B cell (primary cell): ENCODE measurements at regions of chr4 and their contacts with region 1.

Region 1: GRCh38 chr4:164956766-164957643 is 20.5 kb downstream of the TRIM61 start:
- DNase-seq: peak; percentile 82
- ATAC-seq: peak; percentile 100
- H3K4me3 ChIP-seq: peak overlapping the region; percentile 38 to 81 (median 68)
- H3K4me3 Mint-ChIP-seq: peak overlapping the region; percentile 97
- H3K27ac ChIP-seq: peak overlapping the region in 1 of 2 donors; percentile 56
- H3K27ac Mint-ChIP-seq: peak overlapping the region; percentile 88
- H3K4me1 ChIP-seq: peaks cover 8 to 14% of the 10 kb centered on the region in 2 donors
- H3K4me1 Mint-ChIP-seq: peaks cover 18% of the 10 kb centered on the region
- H3K27me3 ChIP-seq: peaks cover 0 to 5% (median 2%) of the 10 kb centered on the region in 4 experiments
- H3K27me3 Mint-ChIP-seq: peaks cover 8% of the 10 kb centered on the region
- CTCF ChIP-seq: no peak

Region 2: DNA sequence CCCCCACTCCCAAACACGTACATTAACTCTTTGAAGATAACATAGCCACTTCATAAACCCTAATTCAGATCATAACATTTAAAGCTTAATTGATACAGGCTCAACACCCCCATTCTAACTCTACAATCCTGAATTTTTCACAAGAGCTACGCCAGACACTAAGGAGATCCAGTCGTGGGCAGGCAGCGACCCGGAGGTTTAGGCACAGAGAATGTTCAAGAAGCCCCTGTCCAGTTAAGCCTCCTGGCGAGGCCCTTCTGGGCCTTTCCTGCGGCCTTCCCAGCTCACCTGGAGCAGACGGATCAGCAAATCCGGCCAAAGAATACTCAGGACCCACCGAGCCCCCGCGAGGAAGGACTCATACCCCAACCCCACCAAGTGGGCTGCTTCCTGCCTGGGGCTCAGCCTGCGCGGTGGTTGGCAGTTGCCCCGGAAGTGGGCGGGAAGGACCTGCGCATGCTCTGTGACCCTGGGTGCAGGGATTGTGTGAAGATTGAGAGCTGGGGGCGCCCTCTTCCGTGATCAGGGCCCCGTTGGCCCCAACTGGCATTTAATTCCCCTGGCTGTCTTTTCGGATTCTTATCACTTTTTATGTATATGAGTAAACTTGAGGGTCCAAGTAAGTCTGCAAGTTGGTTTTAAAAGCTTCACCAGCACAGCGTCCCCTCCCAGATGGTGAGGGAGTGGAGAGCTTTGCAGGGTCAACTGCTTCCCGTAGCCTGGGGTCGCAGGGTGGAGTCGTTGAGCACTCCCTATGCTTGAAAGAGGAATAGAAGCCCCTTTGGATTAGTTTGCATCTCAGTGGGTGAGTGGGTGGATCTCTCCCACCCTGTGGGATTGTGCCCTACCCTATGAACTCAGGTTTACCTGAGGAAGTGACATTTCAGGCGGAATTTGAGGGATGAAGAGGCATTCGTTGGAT is 20.5 kb after region 1 on chr4 and contains the start of gene TRIM61:
- CTCF ChIA-PET with region 1: no interaction called
- POLR2A ChIA-PET with region 1: no interaction called
- intact Hi-C with region 1: loop called (anchors 1 kb)
- DNase-seq: peak; percentile 63
- ATAC-seq: peak; percentile 77
- H3K4me3 ChIP-seq: peak within 1 kb of the TSS; percentile 52 to 80 (median 65)
- H3K4me3 Mint-ChIP-seq: peak within 1 kb of the TSS; percentile 83
- H3K27ac ChIP-seq: peak within 1 kb of the TSS; percentile 36 to 67
- H3K27ac Mint-ChIP-seq: peak within 1 kb of the TSS; percentile 87
- H3K4me1 ChIP-seq: peaks cover 9 to 15% of the 10 kb centered on the region in 2 donors
- H3K4me1 Mint-ChIP-seq: peaks cover 18% of the 10 kb centered on the region
- H3K27me3 ChIP-seq: no peaks in the 10 kb centered on the region
- H3K27me3 Mint-ChIP-seq: no peaks in the 10 kb centered on the region
- CTCF ChIP-seq: no peak
- total RNA-seq, gene TRIM61: 2.2 and 2.3 TPM in 2 replicates